ENCODE measurements at regions of chr2 and their contacts with region 1.

Region 1: GRCh38 chr2:200795044-200795443 is 16.7 kb upstream of the BZW1 start:
- DNase-seq: peak; percentile 52 to 57
- H3K4me3 ChIP-seq: no peak overlapping the region
- H3K4me3 Mint-ChIP-seq: no peak overlapping the region
- H3K27ac Mint-ChIP-seq: no peak overlapping the region
- H3K4me1 ChIP-seq: 0 out of 2 replicates have a peak, but pooled peaks cover 6% of the 10 kb centered on the region
- H3K4me1 Mint-ChIP-seq: peaks cover 21% of the 10 kb centered on the region
- H3K27me3 ChIP-seq: no peaks in the 10 kb centered on the region
- H3K27me3 Mint-ChIP-seq: no peaks in the 10 kb centered on the region
- CTCF ChIP-seq: peak in 1 of 2 experiments; percentile 50

Region 2: DNA sequence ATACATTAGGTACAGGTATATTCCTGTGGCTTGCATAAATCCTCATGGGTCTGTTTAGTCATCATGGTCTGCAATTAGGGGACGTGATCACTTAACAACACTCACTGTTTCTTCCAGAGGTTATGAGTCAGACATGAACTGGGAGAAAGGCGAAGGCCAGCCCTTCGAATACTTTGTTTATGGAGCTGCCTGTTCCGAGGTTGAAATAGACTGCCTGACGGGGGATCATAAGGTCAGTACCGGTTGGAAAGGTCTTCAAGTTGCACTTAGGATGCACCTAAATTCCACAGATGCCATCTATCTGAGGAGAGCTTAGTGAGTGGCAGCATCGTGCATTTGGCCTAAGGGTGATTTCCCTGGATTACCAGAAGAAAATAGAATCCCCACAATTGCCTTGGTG is 132.3 kb before region 1 on chr2:
- CTCF ChIA-PET with region 1: no interaction called
- POLR2A ChIA-PET with region 1: no interaction called
- intact Hi-C with region 1: no loop called
- DNase-seq: peak in 1 of 2 experiments; percentile 47
- H3K4me3 ChIP-seq: no peak overlapping the region
- H3K4me3 Mint-ChIP-seq: no peak overlapping the region
- H3K27ac Mint-ChIP-seq: no peak overlapping the region
- H3K4me1 ChIP-seq: peaks cover 22% of the 10 kb centered on the region
- H3K4me1 Mint-ChIP-seq: peaks cover 16% of the 10 kb centered on the region
- H3K27me3 ChIP-seq: no peaks in the 10 kb centered on the region
- H3K27me3 Mint-ChIP-seq: no peaks in the 10 kb centered on the region
- CTCF ChIP-seq: no peak

Region 3: DNA sequence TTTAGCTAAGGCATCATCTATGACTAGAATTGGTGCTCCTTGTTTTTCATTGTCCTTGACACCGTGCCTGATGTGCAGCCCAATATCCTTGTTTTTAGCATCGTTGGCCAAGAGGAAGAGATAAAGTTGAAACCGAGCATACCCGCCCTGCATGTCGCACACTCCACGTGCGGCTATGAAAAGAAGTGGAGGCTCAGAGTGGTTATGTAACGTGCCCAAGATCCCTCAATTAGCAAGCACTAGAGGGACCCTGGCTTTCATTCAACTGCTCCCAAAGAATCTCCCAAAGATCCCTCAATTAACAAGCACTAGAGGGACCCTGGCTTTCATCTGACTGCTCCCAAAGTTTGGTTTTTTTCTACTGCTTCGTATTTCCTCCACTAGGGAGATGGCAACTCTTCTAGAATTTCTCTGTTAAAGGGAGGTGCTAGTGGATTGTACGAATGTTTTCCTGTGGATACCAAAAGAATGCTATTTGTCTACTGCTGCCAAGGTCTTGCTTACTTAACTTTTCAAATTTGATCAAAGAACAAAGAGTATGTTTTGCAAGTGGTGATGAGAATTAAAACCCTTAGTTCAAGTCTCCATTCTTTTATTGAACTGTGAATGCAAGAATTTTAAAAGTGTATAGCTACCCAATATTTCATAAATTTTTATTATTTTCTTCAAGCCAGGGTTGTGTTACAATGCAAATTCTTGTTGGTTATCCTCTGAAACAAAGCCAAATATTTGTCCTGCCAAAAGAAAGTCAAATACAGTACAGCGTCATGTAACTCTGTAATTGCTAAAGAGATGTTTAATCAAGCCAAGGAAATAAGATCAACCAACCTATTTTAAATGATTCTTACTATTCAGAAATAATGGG is 117.1 kb before region 1 on chr2:
- CTCF ChIA-PET with region 1: no interaction called
- POLR2A ChIA-PET with region 1: no interaction called
- intact Hi-C with region 1: no loop called
- DNase-seq: no peak
- H3K4me3 ChIP-seq: no peak overlapping the region
- H3K4me3 Mint-ChIP-seq: no peak overlapping the region
- H3K27ac Mint-ChIP-seq: no peak overlapping the region
- H3K4me1 ChIP-seq: no peaks in the 10 kb centered on the region
- H3K4me1 Mint-ChIP-seq: no peaks in the 10 kb centered on the region
- H3K27me3 ChIP-seq: no peaks in the 10 kb centered on the region
- H3K27me3 Mint-ChIP-seq: no peaks in the 10 kb centered on the region
- CTCF ChIP-seq: no peak

Region 4: GRCh38 chr2:200703127-200703925 is 91.7 kb before region 1 on chr2:
- CTCF ChIA-PET with region 1: no interaction called
- POLR2A ChIA-PET with region 1: no interaction called
- intact Hi-C with region 1: no loop called
- DNase-seq: peak in 1 of 2 experiments; percentile 60
- H3K4me3 ChIP-seq: no peak overlapping the region
- H3K4me3 Mint-ChIP-seq: no peak overlapping the region
- H3K27ac Mint-ChIP-seq: no peak overlapping the region
- H3K4me1 ChIP-seq: no peaks in the 10 kb centered on the region
- H3K4me1 Mint-ChIP-seq: peaks cover 13% of the 10 kb centered on the region
- H3K27me3 ChIP-seq: no peaks in the 10 kb centered on the region; the same call in 1 of the 2 replicates
- H3K27me3 Mint-ChIP-seq: no peaks in the 10 kb centered on the region
- CTCF ChIP-seq: peak; percentile 42 to 58

Region 5: GRCh38 chr2:200735061-200735460 is 60.0 kb before region 1 on chr2:
- CTCF ChIA-PET with region 1: interaction called, 4 read pairs
- POLR2A ChIA-PET with region 1: no interaction called
- intact Hi-C with region 1: loop called (anchors 1 kb)
- DNase-seq: no peak
- H3K4me3 ChIP-seq: no peak overlapping the region
- H3K4me3 Mint-ChIP-seq: no peak overlapping the region
- H3K27ac Mint-ChIP-seq: no peak overlapping the region
- H3K4me1 ChIP-seq: no peaks in the 10 kb centered on the region; the same call in 1 of the 2 replicates
- H3K4me1 Mint-ChIP-seq: peaks cover 8% of the 10 kb centered on the region
- H3K27me3 ChIP-seq: no peaks in the 10 kb centered on the region; the same call in 1 of the 2 replicates
- H3K27me3 Mint-ChIP-seq: no peaks in the 10 kb centered on the region
- CTCF ChIP-seq: no peak

Region 6: DNA sequence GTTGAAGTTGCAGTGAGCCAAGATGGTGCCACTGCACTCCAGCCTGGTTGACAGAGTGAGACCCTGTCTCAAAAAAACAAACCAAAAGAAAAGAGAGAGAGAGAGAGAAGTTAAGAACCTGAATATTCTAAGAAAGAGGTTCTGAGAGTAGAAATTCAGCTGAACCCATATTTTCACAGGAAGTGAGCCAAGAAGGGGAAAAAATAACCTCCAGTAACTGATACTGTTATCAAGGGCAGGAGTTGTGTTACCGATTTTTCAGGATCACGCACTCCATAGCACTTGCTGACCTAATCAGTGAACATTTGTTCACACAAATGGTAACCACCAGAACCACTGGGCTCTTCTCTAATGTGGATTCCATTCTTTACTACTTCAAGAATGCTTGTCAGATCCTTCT is 22.4 kb before region 1 on chr2:
- CTCF ChIA-PET with region 1: no interaction called
- POLR2A ChIA-PET with region 1: no interaction called
- intact Hi-C with region 1: no loop called
- DNase-seq: no peak
- H3K4me3 ChIP-seq: no peak overlapping the region
- H3K4me3 Mint-ChIP-seq: no peak overlapping the region
- H3K27ac Mint-ChIP-seq: no peak overlapping the region
- H3K4me1 ChIP-seq: peaks cover 14% of the 10 kb centered on the region
- H3K4me1 Mint-ChIP-seq: peaks cover 13% of the 10 kb centered on the region
- H3K27me3 ChIP-seq: no peaks in the 10 kb centered on the region
- H3K27me3 Mint-ChIP-seq: no peaks in the 10 kb centered on the region
- CTCF ChIP-seq: no peak

Measured in Caco-2 (cell line).